ENCODE measurements at regions of chr7 and their contacts with region 1.

Region 1: GRCh38 chr7:73701357-73701995 is 18.0 kb downstream of the STX1A start:
- DNase-seq: peak; percentile 46
- H3K4me3 ChIP-seq: no peak overlapping the region
- H3K27ac ChIP-seq: no peak overlapping the region
- H3K4me1 ChIP-seq: no peaks in the 10 kb centered on the region
- H3K27me3 ChIP-seq: no peaks in the 10 kb centered on the region
- CTCF ChIP-seq: peak; percentile 54 to 68
- POLR2A ChIP-seq: no peak

Region 2: GRCh38 chr7:73690646-73691045 is 10.8 kb before region 1 on chr7:
- CTCF ChIA-PET with region 1: interaction called, 15 read pairs
- POLR2A ChIA-PET with region 1: no interaction called
- dilution Hi-C with region 1: no loop called
- intact Hi-C with region 1: no loop called
- DNase-seq: no peak
- H3K4me3 ChIP-seq: no peak overlapping the region
- H3K27ac ChIP-seq: no peak overlapping the region
- H3K4me1 ChIP-seq: no peaks in the 10 kb centered on the region
- H3K27me3 ChIP-seq: no peaks in the 10 kb centered on the region
- CTCF ChIP-seq: no peak
- POLR2A ChIP-seq: no peak

Region 3: DNA sequence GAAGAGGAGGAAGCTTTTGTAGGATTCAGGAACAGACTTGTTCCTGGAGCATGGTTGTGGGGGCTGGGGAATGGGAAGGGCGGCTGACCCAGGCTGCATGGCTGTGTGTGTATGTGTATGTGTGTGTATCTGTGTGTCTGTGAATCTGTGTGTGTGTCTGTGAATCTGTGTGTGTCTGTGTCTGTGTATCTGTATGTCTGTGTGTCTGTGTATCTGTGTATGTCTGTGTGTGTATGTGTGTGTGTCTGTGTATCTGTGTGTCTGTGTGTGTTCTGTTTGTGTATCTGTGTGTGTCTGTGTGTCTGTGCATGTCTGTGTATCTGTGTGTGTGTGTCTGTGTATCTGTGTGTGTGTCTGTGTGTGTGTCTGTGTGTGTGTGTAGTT is 24.6 kb after region 1 on chr7:
- CTCF ChIA-PET with region 1: interaction called, 25 read pairs
- POLR2A ChIA-PET with region 1: no interaction called
- dilution Hi-C with region 1: no loop called
- intact Hi-C with region 1: no loop called
- DNase-seq: no peak
- H3K4me3 ChIP-seq: no peak overlapping the region
- H3K27ac ChIP-seq: no peak overlapping the region
- H3K4me1 ChIP-seq: peaks cover 5% of the 10 kb centered on the region
- H3K27me3 ChIP-seq: no peaks in the 10 kb centered on the region
- CTCF ChIP-seq: no peak
- POLR2A ChIP-seq: no peak